Activated T-helper 2 cell treated with anti-CD3 and anti-CD28 coated beads, Interferon-gamma antibody, Interleukin-2, Interleukin-4, amounts not matched to agents 10 μg/mL and 5 μg/mL and 100 μg/mL, durations not matched to agents 14 hours and 24 hours and 36 hours (primary cell): ENCODE measurements at regions of chr4 and their contacts with region 1.

Region 1: GRCh38 chr4:113607998-113608397 is 153.5 kb downstream of the CAMK2D start:
- DNase-seq: no peak
- H3K4me3 Mint-ChIP-seq: no peak overlapping the region
- H3K27ac Mint-ChIP-seq: no peak overlapping the region
- H3K4me1 Mint-ChIP-seq: peaks cover 25% of the 10 kb centered on the region
- H3K27me3 Mint-ChIP-seq: no peaks in the 10 kb centered on the region

Region 2: GRCh38 chr4:113574636-113575103 is 33.3 kb before region 1 on chr4:
- intact Hi-C with region 1: loop called (anchors 5 kb)
- DNase-seq: no peak
- H3K4me3 Mint-ChIP-seq: no peak overlapping the region
- H3K27ac Mint-ChIP-seq: no peak overlapping the region
- H3K4me1 Mint-ChIP-seq: peaks cover 68% of the 10 kb centered on the region
- H3K27me3 Mint-ChIP-seq: no peaks in the 10 kb centered on the region

Region 3: GRCh38 chr4:113673450-113673849 is 65.5 kb after region 1 on chr4:
- intact Hi-C with region 1: no loop called
- DNase-seq: peak; percentile 19
- H3K4me3 Mint-ChIP-seq: no peak overlapping the region
- H3K27ac Mint-ChIP-seq: peak overlapping the region; percentile 47
- H3K4me1 Mint-ChIP-seq: peaks cover 45% of the 10 kb centered on the region
- H3K27me3 Mint-ChIP-seq: no peaks in the 10 kb centered on the region

Region 4: GRCh38 chr4:113738251-113738650 is 130.3 kb after region 1 on chr4:
- intact Hi-C with region 1: no loop called
- DNase-seq: no peak
- H3K4me3 Mint-ChIP-seq: no peak overlapping the region
- H3K27ac Mint-ChIP-seq: no peak overlapping the region
- H3K4me1 Mint-ChIP-seq: peaks cover 43% of the 10 kb centered on the region
- H3K27me3 Mint-ChIP-seq: no peaks in the 10 kb centered on the region

Region 5: GRCh38 chr4:113756005-113756410 is 148.0 kb after region 1 on chr4:
- intact Hi-C with region 1: no loop called
- DNase-seq: no peak
- H3K4me3 Mint-ChIP-seq: peak overlapping the region; percentile 10
- H3K27ac Mint-ChIP-seq: peak overlapping the region; percentile 40
- H3K4me1 Mint-ChIP-seq: peaks cover 38% of the 10 kb centered on the region
- H3K27me3 Mint-ChIP-seq: no peaks in the 10 kb centered on the region